Heart left ventricle (tissue), 16 donors: ENCODE measurements at regions of chr4 and their contacts with region 1.

Region 1: DNA sequence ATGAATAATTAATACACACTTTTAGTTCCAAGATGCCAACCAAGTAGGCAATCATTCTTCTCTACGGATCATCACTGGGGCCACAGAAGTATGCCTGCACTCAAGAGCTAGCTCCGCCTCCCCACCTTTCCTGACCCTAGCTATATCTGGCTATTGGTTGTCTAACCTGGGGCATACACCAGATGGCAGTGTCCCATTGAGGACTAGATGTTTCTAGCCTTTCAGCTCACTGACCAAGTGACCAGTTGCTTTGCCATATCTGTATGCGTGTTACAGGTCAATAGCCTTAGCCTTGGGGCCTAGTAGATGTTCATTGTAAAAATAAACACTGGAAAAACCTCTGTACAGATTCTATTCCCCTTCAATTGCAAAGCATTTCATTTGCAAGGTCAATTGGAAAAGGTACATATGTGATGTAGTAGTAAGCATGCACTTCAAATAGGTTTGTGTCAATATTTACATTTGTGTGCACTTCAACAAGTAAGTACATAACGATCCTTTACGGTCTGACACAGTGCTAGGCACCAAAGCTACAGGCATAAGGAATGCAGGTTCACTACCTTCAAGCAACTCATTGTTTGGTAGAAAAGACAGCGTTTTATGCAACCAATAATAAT is 521.7 kb downstream of the PPARGC1A start:
- DNase-seq: peak in 4 of 5 donors; percentile 22 to 60 (median 43)
- ATAC-seq: peak; percentile 64 to 87 (median 85)
- H3K4me3 ChIP-seq: no peak overlapping the region
- H3K27ac ChIP-seq: peak overlapping the region in 2 of 12 donors; percentile 8 to 50
- H3K4me1 ChIP-seq: peaks cover 0 to 23% (median 2%) of the 10 kb centered on the region in 12 donors
- H3K27me3 ChIP-seq: no peaks in the 10 kb centered on the region
- CTCF ChIP-seq: peak in 11 of 12 donors; percentile 36 to 67 (median 50)
- POLR2A ChIP-seq: no peak

Region 2: DNA sequence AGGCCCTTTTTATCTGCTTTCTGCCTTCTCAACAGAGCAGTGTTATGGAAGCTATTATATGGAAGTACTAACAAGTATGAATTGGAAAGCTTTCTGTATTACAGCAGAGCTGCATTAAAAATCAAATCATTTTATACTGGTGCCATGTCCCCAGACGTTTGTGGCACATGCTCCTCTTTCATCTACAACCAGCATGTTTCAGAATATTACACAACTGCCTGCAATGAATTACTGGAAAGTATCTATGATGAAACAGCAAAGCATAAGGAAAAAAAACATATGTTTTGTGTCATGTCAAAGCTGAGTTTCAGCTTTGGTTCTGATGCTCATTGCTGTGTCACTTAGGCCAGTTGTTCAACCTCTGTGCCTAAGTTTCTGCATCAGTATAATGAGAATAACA is 98.6 kb before region 1 on chr4:
- intact Hi-C with region 1: no loop called
- DNase-seq: no peak
- ATAC-seq: no peak
- H3K4me3 ChIP-seq: no peak overlapping the region
- H3K27ac ChIP-seq: no peak overlapping the region
- H3K4me1 ChIP-seq: no peaks in the 10 kb centered on the region
- H3K27me3 ChIP-seq: no peaks in the 10 kb centered on the region
- CTCF ChIP-seq: no peak
- POLR2A ChIP-seq: no peak

Region 3: GRCh38 chr4:23324021-23324690 is 44.0 kb before region 1 on chr4:
- intact Hi-C with region 1: no loop called
- DNase-seq: no peak
- ATAC-seq: no peak
- H3K4me3 ChIP-seq: no peak overlapping the region
- H3K27ac ChIP-seq: no peak overlapping the region
- H3K4me1 ChIP-seq: peaks cover 0 to 5% (median 0%) of the 10 kb centered on the region in 12 donors
- H3K27me3 ChIP-seq: no peaks in the 10 kb centered on the region
- CTCF ChIP-seq: no peak
- POLR2A ChIP-seq: no peak

Region 4: GRCh38 chr4:23614284-23614892 is 246.2 kb after region 1 on chr4:
- intact Hi-C with region 1: loop called in 3 of 10 experiments (anchors 5 to 10 kb)
- DNase-seq: no peak
- ATAC-seq: peak in 3 of 4 donors; percentile 45 to 80 (median 64)
- H3K4me3 ChIP-seq: no peak overlapping the region
- H3K27ac ChIP-seq: no peak overlapping the region
- H3K4me1 ChIP-seq: no peaks in the 10 kb centered on the region
- H3K27me3 ChIP-seq: no peaks in the 10 kb centered on the region
- CTCF ChIP-seq: peak in 8 of 12 donors; percentile 4 to 45 (median 30)
- POLR2A ChIP-seq: no peak

Region 5: DNA sequence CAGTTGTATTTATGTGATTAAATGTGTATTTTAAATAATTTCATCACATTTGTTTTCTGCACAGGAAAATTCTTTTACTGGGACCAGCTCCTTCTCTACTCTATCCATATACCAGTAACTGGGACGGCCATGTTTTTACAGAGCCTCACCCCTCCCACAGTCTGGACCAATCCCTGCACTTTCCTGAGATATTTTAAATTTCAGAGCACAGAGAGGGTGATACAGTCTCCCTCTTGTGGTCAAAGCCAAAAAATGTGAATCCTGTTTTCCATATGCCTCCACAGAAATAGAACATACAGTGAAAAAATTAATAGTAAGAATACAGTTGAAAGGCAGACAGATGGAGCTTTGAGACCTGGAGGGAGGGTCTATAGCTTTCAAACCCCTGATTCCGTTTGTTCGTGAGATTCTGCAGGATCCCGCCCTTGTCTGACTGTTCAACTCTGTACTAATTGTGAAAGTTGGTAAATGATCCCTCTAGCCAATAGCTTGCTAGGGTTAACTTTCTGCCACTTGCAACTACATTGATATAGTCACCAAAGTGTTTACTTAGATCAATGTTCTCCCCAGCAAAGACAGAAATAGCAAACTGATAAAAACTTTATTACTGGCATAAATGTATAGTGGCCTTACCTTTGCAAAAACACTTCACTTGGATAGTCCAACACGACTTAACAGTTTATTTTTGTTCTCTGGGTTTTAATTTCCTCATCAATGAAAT is 349.5 kb after region 1 on chr4:
- intact Hi-C with region 1: loop called in 1 of 10 experiments (anchors 5 kb)
- DNase-seq: no peak
- ATAC-seq: no peak
- H3K4me3 ChIP-seq: no peak overlapping the region
- H3K27ac ChIP-seq: no peak overlapping the region
- H3K4me1 ChIP-seq: no peaks in the 10 kb centered on the region
- H3K27me3 ChIP-seq: no peaks in the 10 kb centered on the region
- CTCF ChIP-seq: peak in 10 of 12 donors; percentile 6 to 45 (median 26)
- POLR2A ChIP-seq: no peak